ENCODE measurements at regions of chr6 and their contacts with region 1.

Region 1: GRCh38 chr6:50128420-50129005 is 78.8 kb upstream of the DEFB112 start:
- DNase-seq: no peak
- ATAC-seq: no peak
- H3K4me3 ChIP-seq: no peak overlapping the region
- H3K4me3 Mint-ChIP-seq: no peak overlapping the region
- H3K27ac ChIP-seq: no peak overlapping the region
- H3K27ac Mint-ChIP-seq: no peak overlapping the region
- H3K4me1 ChIP-seq: no peaks in the 10 kb centered on the region
- H3K4me1 Mint-ChIP-seq: no peaks in the 10 kb centered on the region
- H3K27me3 ChIP-seq: no peaks in the 10 kb centered on the region
- H3K27me3 Mint-ChIP-seq: no peaks in the 10 kb centered on the region
- CTCF ChIP-seq: peak; percentile 42

Region 2: DNA sequence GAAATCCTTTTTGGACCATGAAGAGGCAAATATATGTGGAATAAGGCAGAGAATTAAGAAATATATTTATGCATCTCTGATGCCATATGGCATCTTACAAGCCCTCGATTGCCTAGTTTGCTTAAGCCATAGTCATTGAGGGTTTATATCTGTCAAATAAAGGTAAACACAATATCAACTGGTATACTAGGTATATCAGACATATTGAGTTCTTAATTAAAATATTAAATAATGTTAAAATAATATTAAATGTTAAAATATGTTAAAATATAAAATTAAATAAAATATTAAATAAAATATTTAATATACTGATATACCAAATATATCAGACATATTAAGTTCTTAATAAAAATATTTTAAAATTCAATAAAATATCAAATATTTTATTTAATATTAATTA is 1450.1 kb before region 1 on chr6:
- CTCF ChIA-PET with region 1: no interaction called
- POLR2A ChIA-PET with region 1: no interaction called
- intact Hi-C with region 1: no loop called
- DNase-seq: no peak
- ATAC-seq: no peak
- H3K4me3 ChIP-seq: no peak overlapping the region
- H3K4me3 Mint-ChIP-seq: no peak overlapping the region
- H3K27ac ChIP-seq: no peak overlapping the region
- H3K27ac Mint-ChIP-seq: no peak overlapping the region
- H3K4me1 ChIP-seq: no peaks in the 10 kb centered on the region
- H3K4me1 Mint-ChIP-seq: no peaks in the 10 kb centered on the region
- H3K27me3 ChIP-seq: no peaks in the 10 kb centered on the region
- H3K27me3 Mint-ChIP-seq: no peaks in the 10 kb centered on the region
- CTCF ChIP-seq: no peak

Region 3: DNA sequence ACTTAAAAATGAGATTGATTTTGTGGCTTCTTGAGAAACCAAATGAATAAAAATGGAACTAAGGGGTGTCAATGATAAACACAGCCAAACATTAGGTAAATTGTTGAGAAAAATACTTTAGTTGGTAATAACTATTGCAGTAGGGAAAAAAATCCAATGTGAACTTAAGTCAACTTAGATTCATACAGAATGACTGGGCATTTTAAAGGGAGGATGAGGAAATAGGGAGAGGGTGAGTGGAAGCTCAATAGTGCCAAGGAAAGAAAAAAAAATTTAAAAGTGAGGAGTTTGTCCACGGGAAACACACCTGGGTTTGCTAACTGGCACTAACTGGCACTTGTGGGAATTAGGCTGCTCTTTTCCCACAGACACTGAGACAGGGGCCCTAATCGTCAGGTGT is 315.3 kb before region 1 on chr6:
- CTCF ChIA-PET with region 1: no interaction called
- POLR2A ChIA-PET with region 1: no interaction called
- intact Hi-C with region 1: no loop called
- DNase-seq: no peak
- ATAC-seq: no peak
- H3K4me3 ChIP-seq: no peak overlapping the region
- H3K4me3 Mint-ChIP-seq: no peak overlapping the region
- H3K27ac ChIP-seq: no peak overlapping the region
- H3K27ac Mint-ChIP-seq: no peak overlapping the region
- H3K4me1 ChIP-seq: no peaks in the 10 kb centered on the region
- H3K4me1 Mint-ChIP-seq: no peaks in the 10 kb centered on the region
- H3K27me3 ChIP-seq: no peaks in the 10 kb centered on the region
- H3K27me3 Mint-ChIP-seq: no peaks in the 10 kb centered on the region
- CTCF ChIP-seq: no peak

Region 4: GRCh38 chr6:50791900-50792508 is 663.5 kb after region 1 on chr6:
- CTCF ChIA-PET with region 1: no interaction called
- POLR2A ChIA-PET with region 1: no interaction called
- intact Hi-C with region 1: loop called in 1 of 2 experiments (anchors 10 kb)
- DNase-seq: peak in 1 of 9 experiments; percentile 3
- ATAC-seq: no peak
- H3K4me3 ChIP-seq: no peak overlapping the region
- H3K4me3 Mint-ChIP-seq: no peak overlapping the region
- H3K27ac ChIP-seq: no peak overlapping the region
- H3K27ac Mint-ChIP-seq: no peak overlapping the region
- H3K4me1 ChIP-seq: no peaks in the 10 kb centered on the region
- H3K4me1 Mint-ChIP-seq: no peaks in the 10 kb centered on the region
- H3K27me3 ChIP-seq: no peaks in the 10 kb centered on the region
- H3K27me3 Mint-ChIP-seq: no peaks in the 10 kb centered on the region
- CTCF ChIP-seq: no peak

Measured in CD8-positive, alpha-beta T cell (primary cell).